Mucosa of descending colon (tissue), 3 donors: ENCODE measurements at regions of chr11 and their contacts with region 1.

Region 1: GRCh38 chr11:57644748-57645688 is 4.7 kb downstream of the YPEL4 start:
- DNase-seq: peak; percentile 71 to 93 (median 84)
- ATAC-seq: peak; percentile 83
- H3K4me3 ChIP-seq: no peak overlapping the region
- H3K4me1 ChIP-seq: no peaks in the 10 kb centered on the region
- CTCF ChIP-seq: peak; percentile 83

Region 2: GRCh38 chr11:57345555-57346211 is 299.3 kb before region 1 on chr11:
- intact Hi-C with region 1: loop called in 1 of 2 experiments (anchors 10 kb)
- DNase-seq: peak in 2 of 3 donors; percentile 71 to 92
- ATAC-seq: peak; percentile 91
- H3K4me3 ChIP-seq: no peak overlapping the region
- H3K4me1 ChIP-seq: no peaks in the 10 kb centered on the region
- CTCF ChIP-seq: peak; percentile 68

Region 3: DNA sequence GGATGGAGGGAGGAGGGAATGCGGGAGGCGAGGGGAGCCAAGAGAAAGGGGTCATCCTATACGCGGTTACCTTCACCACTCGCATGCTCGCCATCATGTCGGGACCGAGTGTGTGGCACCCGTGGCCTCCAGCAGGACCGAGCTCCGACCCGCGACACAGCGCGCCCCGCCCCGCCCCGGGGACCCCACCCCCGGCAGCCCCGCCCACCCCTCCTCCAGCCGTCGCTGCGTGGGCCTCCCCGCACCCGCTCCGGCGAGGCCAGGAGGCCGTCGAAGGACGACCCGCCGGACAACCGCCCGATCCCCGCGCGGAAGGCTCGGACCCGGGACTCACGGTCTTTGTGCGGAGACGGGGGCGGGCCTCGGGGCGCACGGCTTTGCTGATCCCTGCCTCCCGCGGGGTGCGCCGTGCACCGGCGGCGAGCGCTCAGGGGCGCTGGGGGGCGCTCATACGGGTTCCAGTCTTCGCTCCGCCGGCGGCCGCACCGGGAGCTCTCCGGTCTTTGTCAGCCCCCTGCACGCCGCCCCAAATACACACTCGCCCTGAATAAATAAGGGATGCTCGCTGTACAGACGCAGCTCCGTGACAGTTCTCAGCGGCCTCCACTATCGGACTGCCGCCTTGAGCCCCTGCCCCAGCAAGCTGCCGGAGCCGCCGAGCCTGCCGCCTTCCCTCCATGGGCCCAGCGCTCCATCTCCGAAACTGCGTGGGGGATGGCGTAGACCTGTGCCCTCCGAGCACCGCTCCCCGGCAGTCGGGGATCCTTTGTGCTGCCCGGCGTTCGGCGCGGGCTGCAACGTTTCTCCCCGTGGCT is 77.3 kb before region 1 on chr11 and contains the start of gene UBE2L6:
- intact Hi-C with region 1: loop called (anchors 5 kb)
- DNase-seq: peak; percentile 61 to 88 (median 85)
- ATAC-seq: peak; percentile 87
- H3K4me3 ChIP-seq: peak within 1 kb of the TSS; percentile 63
- H3K4me1 ChIP-seq: peaks cover 10% of the 10 kb centered on the region
- CTCF ChIP-seq: no peak
- total RNA-seq, gene UBE2L6: 26.1 to 57.3 (median 53.9) TPM